Activated B cell treated with CpG ODN at 0.5 μM for 24 hours (primary cell): ENCODE measurements at regions of chr19 and their contacts with region 1.

Region 1: DNA sequence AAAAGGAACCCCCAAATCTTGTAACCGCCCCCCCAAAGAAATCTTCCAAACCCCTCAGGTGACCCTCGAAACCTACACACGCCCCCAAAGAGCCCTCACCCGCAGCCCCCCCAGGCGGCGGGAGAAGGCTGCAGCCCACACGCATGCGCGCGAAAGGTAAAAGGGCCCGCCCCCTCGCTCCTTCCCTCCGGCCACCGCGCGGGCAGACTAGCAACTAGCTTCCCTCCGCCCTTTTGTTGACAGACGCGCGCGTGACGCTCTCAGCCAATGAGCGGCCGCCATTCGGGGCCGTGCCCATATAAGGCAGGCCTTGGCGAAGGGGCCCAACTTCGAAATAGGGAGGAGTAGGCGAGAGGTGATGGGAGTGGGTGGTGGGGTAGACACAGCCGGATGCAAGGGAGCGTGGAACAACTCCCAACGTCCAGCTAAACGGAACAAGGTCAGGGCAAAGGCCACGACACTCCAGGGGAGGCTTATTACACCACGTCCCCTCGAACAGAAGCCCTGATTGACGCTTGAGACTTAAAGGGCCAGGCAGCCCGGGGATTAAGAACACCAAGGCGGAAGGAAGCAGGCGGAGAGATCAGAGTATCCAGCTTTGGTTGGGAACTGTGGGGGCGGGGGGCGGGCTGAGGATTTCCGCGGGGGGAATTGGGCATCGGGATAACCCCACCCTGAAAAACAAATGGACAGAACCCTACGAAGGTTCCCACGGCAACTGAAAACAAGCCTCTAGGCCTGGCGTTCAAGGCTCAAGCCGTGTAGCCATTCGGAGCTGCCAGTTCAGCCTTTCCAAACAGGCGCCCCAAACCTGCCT is 13.3 kb downstream of the FBXO46 start:
- DNase-seq: peak; percentile 92
- ATAC-seq: peak; percentile 95
- H3K4me3 Mint-ChIP-seq: peak overlapping the region; percentile 96
- H3K27ac Mint-ChIP-seq: peak overlapping the region; percentile 92
- H3K4me1 Mint-ChIP-seq: peaks cover 35% of the 10 kb centered on the region
- H3K27me3 Mint-ChIP-seq: no peaks in the 10 kb centered on the region
- CTCF ChIP-seq: no peak

Region 2: GRCh38 chr19:45469132-45469944 is 248.0 kb before region 1 on chr19:
- CTCF ChIA-PET with region 1: no interaction called
- POLR2A ChIA-PET with region 1: interaction called, 14 read pairs
- intact Hi-C with region 1: no loop called
- DNase-seq: peak; percentile 92
- ATAC-seq: peak; percentile 52
- H3K4me3 Mint-ChIP-seq: peak overlapping the region; percentile 92
- H3K27ac Mint-ChIP-seq: peak overlapping the region; percentile 98
- H3K4me1 Mint-ChIP-seq: peaks cover 57% of the 10 kb centered on the region
- H3K27me3 Mint-ChIP-seq: peaks cover 16% of the 10 kb centered on the region
- CTCF ChIP-seq: no peak

Region 3: GRCh38 chr19:45584332-45585157 is 132.8 kb before region 1 on chr19 and contains the start of gene OPA3:
- CTCF ChIA-PET with region 1: no interaction called
- POLR2A ChIA-PET with region 1: interaction called, 12 read pairs
- intact Hi-C with region 1: loop called (anchors 1 kb)
- DNase-seq: peak; percentile 94
- ATAC-seq: peak; percentile 89
- H3K4me3 Mint-ChIP-seq: peak within 1 kb of the TSS; percentile 96
- H3K27ac Mint-ChIP-seq: peak within 1 kb of the TSS; percentile 98
- H3K4me1 Mint-ChIP-seq: peaks cover 13% of the 10 kb centered on the region
- H3K27me3 Mint-ChIP-seq: peaks cover 5% of the 10 kb centered on the region
- CTCF ChIP-seq: no peak
- total RNA-seq, gene OPA3: 12.0 and 14.4 TPM in 2 replicates

Region 4: DNA sequence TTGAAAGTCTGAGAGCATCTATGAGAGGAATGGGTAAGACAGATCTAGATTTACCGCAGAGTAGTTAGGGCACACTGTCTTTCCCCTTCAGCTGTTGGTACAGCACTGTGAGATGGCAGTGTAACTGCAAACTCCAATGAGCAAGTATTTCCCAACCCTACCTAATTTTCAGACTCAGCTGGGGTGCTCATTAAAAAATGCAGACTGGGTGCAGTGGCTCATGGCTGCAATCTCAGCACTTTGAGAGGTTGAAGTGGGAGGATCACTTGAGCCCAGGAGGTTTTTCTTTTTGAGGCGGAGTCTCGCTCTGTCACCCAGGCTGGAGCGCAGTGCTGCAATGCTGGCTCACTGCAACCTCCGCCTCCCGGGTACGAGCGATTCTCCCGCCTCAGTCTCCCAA is 12.3 kb before region 1 on chr19:
- CTCF ChIA-PET with region 1: interaction called, 3 read pairs
- POLR2A ChIA-PET with region 1: interaction called, 74 read pairs
- intact Hi-C with region 1: loop called (anchors 1 kb)
- DNase-seq: no peak
- ATAC-seq: no peak
- H3K4me3 Mint-ChIP-seq: no peak overlapping the region
- H3K27ac Mint-ChIP-seq: no peak overlapping the region
- H3K4me1 Mint-ChIP-seq: peaks cover 31% of the 10 kb centered on the region
- H3K27me3 Mint-ChIP-seq: no peaks in the 10 kb centered on the region
- CTCF ChIP-seq: no peak

Region 5: DNA sequence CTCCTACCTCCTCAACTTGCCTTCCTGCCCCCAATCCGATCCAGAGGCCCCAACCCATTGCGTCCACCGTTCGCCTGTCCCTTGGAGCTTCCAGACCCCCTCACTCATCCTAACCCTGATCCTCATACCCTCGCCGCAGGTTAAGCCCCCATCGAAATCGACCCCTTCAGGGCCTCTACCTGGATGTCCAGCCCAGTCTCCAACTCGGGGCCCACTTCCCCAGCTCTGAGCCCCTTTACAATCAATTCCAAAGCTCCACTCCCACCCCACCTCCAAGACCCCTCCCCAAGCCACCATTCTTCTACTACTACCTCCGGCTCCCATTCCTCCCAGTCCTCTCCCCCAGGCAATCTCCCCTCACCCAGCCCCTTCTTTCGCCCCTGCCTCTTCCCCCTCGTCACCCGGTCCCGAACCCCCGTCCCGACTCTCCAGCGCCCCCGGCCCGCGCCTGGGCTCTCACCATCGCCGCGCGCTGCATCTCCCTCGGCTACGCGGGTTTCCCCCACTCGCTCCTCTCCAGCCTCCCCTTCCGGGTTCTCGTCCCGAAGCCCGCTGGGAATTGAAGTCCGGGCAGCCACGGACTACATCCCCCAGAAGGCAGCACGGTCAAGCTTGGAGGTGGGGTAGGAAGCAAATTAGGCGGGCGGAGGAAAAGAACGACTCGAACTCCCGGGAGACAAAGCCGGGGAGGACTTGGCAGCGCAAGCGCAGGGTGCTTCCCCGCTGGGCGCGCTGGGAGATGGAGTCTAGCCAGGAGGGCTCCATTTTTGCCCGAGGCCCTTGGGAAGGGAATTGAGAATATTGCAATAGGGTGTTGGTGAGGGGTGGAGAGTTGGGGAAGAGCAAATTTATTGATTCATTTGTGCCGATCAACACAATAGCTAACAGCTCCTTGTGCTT is 13.3 kb after region 1 on chr19 and contains the start of gene FBXO46:
- CTCF ChIA-PET with region 1: interaction called, 3 read pairs
- POLR2A ChIA-PET with region 1: interaction called, 59 read pairs
- intact Hi-C with region 1: loop called (anchors 1 kb)
- DNase-seq: peak; percentile 86
- ATAC-seq: peak; percentile 98
- H3K4me3 Mint-ChIP-seq: peak within 1 kb of the TSS; percentile 95
- H3K27ac Mint-ChIP-seq: peak within 1 kb of the TSS; percentile 93
- H3K4me1 Mint-ChIP-seq: peaks cover 25% of the 10 kb centered on the region
- H3K27me3 Mint-ChIP-seq: no peaks in the 10 kb centered on the region
- CTCF ChIP-seq: no peak
- total RNA-seq, gene FBXO46: 36.3 and 44.0 TPM in 2 replicates

Region 6: GRCh38 chr19:45792470-45793177 is 75.2 kb after region 1 on chr19 and contains the start of gene DMWD:
- CTCF ChIA-PET with region 1: no interaction called
- POLR2A ChIA-PET with region 1: interaction called, 8 read pairs
- intact Hi-C with region 1: loop called (anchors 1 kb)
- DNase-seq: peak; percentile 100
- ATAC-seq: peak; percentile 96
- H3K4me3 Mint-ChIP-seq: peak within 1 kb of the TSS; percentile 88
- H3K27ac Mint-ChIP-seq: peak within 1 kb of the TSS; percentile 76
- H3K4me1 Mint-ChIP-seq: peaks cover 27% of the 10 kb centered on the region
- H3K27me3 Mint-ChIP-seq: peaks cover 5% of the 10 kb centered on the region
- CTCF ChIP-seq: no peak
- total RNA-seq, gene DMWD: 64.7 and 77.3 TPM in 2 replicates